HEK293 (cell line): ENCODE measurements at regions of chr9 and their contacts with region 1.

Region 1: GRCh38 chr9:94783102-94783664 is 56.7 kb downstream of the AOPEP start:
- H3K4me3 ChIP-seq: no peak overlapping the region
- H3K27ac ChIP-seq: no peak overlapping the region
- H3K4me1 ChIP-seq: no peaks in the 10 kb centered on the region
- CTCF ChIP-seq: peak; percentile 49

Region 2: GRCh38 chr9:94768766-94769165 is 14.4 kb before region 1 on chr9:
- CTCF ChIA-PET with region 1: interaction called, 14 read pairs
- POLR2A ChIA-PET with region 1: no interaction called
- H3K4me3 ChIP-seq: no peak overlapping the region
- H3K27ac ChIP-seq: no peak overlapping the region
- H3K4me1 ChIP-seq: no peaks in the 10 kb centered on the region
- CTCF ChIP-seq: no peak

Region 3: GRCh38 chr9:94799578-94800264 is 16.5 kb after region 1 on chr9:
- CTCF ChIA-PET with region 1: interaction called, 10 read pairs
- POLR2A ChIA-PET with region 1: no interaction called
- H3K4me3 ChIP-seq: no peak overlapping the region
- H3K27ac ChIP-seq: no peak overlapping the region
- H3K4me1 ChIP-seq: peaks cover 6% of the 10 kb centered on the region; the same call in 1 of the 2 replicates
- CTCF ChIP-seq: no peak

Region 4: DNA sequence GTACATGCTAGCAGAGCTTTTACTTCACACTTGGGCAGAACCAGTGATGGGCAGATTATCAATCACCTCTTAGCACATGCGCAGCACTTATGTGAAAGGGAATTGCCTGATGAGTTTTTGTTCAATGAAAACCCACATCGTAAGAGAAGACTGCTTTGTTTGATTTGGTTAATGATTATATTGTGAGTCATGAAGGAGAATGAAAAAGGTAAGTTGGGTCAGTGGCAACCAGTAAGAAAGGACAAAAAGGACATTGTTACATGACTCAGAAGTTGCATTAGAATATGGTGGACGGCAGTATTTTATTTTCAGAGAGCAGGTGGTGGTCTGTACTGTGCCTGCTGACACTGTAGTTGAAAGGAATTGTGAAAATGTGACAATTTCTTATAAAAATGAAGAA is 70.7 kb after region 1 on chr9:
- CTCF ChIA-PET with region 1: no interaction called
- POLR2A ChIA-PET with region 1: no interaction called
- H3K4me3 ChIP-seq: no peak overlapping the region
- H3K27ac ChIP-seq: no peak overlapping the region
- H3K4me1 ChIP-seq: no peaks in the 10 kb centered on the region
- CTCF ChIP-seq: no peak

Region 5: GRCh38 chr9:95116003-95116807 is 333.0 kb after region 1 on chr9:
- CTCF ChIA-PET with region 1: interaction called, 14 read pairs
- POLR2A ChIA-PET with region 1: no interaction called
- H3K4me3 ChIP-seq: no peak overlapping the region
- H3K27ac ChIP-seq: no peak overlapping the region
- H3K4me1 ChIP-seq: no peaks in the 10 kb centered on the region
- CTCF ChIP-seq: no peak